HepG2 (cell line): ENCODE measurements at regions of chr16 and their contacts with region 1.

Region 1: DNA sequence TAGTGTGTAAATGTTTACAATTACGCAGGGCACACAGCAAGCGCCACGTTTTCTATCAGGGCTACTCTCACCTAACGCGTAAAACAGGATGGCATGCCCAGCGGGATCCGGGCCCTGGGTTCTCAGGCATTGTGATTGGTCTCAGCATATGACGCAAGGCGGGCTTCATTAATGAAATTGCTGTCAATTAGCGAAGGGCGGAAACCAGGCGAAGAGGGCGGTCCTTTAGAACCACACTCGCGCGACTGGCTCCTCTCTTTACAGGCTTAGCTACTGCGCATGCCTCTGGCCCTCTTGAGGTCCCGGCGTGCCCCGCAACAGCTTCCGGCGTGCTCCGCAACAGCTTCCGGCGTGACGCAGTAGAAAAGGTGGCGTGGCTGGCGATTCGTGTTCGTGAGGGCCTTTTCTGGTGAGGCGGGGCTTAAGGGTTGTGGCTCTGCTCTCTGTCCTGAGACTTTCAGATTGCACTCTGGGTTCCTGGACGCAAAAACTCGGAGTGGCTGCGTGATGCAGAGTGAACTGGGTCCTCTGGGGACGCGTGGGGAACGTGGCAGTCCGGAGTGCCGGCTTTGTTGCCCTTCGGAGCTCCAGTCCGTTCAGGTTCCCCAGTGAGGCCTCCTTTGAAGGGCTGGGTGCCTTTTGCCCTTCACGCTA is 9.2 kb downstream of the OR2C1 start:
- DNase-seq: peak; percentile 94
- ATAC-seq: peak; percentile 87
- H3K4me3 ChIP-seq: peak overlapping the region; percentile 74 to 79 (median 75); a peak in 5 of 6 replicates
- H3K27ac ChIP-seq: peak overlapping the region; percentile 93
- H3K4me1 ChIP-seq: peaks cover 20% of the 10 kb centered on the region
- H3K27me3 ChIP-seq: peaks cover 0 to 13% of the 10 kb centered on the region in 2 experiments; a peak in 2 of 5 replicates
- CTCF ChIP-seq: no peak
- EP300 ChIP-seq: no peak
- POLR2A ChIP-seq: peak; percentile 65 to 84
- RAD21 ChIP-seq: no peak

Region 2: DNA sequence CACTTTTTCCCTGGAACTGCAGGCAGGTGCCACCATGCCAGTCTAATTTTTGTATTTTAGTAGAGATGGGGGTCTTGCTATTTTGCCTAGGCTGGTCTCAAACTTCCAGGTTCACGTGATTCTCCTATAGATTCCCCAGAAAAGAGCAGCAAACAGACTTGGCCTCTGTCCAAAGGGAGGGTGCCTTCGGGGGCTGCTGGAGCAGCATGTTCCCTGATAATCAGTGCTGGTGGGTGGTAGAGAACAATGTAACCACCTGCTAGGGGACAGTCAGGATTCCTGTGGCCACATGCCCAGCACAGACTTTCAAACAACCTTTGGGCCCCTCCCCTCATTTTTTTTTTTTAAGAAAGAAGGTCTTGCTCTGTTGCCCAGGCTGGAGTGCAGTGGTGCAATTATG is 949.8 kb before region 1 on chr16:
- CTCF ChIA-PET with region 1: no interaction called
- POLR2A ChIA-PET with region 1: no interaction called
- in situ Hi-C with region 1: no loop called
- intact Hi-C with region 1: no loop called
- DNase-seq: no peak
- ATAC-seq: no peak
- H3K4me3 ChIP-seq: no peak overlapping the region
- H3K27ac ChIP-seq: no peak overlapping the region
- H3K4me1 ChIP-seq: peaks cover 8% of the 10 kb centered on the region
- H3K27me3 ChIP-seq: peaks cover 0 to 23% of the 10 kb centered on the region in 2 experiments; a peak in 3 of 5 replicates
- CTCF ChIP-seq: no peak
- EP300 ChIP-seq: no peak
- POLR2A ChIP-seq: no peak
- RAD21 ChIP-seq: no peak

Region 3: GRCh38 chr16:3282730-3283524 is 82.0 kb before region 1 on chr16 and contains the start of gene ZNF263:
- CTCF ChIA-PET with region 1: no interaction called
- POLR2A ChIA-PET with region 1: interaction called, 24 read pairs
- in situ Hi-C with region 1: no loop called
- intact Hi-C with region 1: loop called (anchors 1 kb)
- DNase-seq: peak; percentile 97
- ATAC-seq: peak; percentile 93
- H3K4me3 ChIP-seq: peak within 1 kb of the TSS; percentile 79 to 100 (median 99)
- H3K27ac ChIP-seq: peak within 1 kb of the TSS; percentile 99
- H3K4me1 ChIP-seq: peaks cover 45% of the 10 kb centered on the region
- H3K27me3 ChIP-seq: no peaks in the 10 kb centered on the region; a peak in 1 of 5 replicates
- CTCF ChIP-seq: peak; percentile 16; the same call in 1 of the 2 replicates
- EP300 ChIP-seq: peak in 1 of 2 experiments; percentile 29; a peak in 1 of 4 replicates
- POLR2A ChIP-seq: peak; percentile 68 to 89
- RAD21 ChIP-seq: peak; percentile 28
- total RNA-seq, gene ZNF263: 40.3 and 41.2 TPM in 2 replicates

Region 4: DNA sequence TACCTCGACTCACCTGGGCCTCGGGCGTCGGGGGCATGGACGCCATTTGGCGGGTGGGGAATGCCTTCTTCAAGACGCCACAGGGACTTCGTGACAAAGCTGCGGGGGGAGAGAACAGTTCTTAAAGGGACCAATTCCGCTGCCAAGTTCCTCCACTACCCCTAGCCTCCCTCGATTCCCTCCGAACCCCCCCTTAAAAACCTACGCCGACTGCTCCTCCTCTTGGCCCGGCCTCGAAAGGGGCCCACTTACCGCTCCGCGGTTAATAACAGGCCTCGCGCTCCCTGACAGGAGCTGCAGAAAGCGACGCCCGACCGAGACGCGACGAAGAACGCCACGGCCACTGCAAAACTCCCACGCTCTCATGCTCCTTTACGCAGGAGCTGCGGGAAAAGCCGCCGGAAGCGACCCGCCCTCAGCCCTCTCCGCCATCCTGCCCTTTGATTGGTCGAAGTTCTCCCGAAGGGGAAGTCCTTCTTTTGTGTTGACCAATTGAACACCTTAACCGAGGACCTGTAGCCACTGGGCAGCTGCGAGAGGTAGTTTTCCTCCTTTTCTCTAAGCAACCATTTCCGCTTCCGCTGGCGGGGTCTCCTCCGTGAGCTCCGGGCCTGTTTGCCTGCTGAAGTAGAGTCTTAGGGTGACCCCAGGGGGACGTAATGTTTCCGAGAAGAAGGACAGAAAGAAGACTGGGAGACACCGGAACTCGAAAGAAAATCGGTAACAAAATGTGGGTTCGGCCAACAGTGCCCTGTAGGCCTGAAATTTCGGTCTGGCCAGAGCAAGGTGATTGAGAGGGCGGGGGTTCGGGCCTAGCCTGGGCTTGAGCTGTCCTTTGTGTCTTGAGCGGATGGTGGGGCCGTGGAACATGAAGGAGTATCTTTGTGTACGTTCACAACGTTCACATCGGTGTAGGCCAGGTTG is 78.5 kb after region 1 on chr16 and contains the starts of genes NAA60 and ZNF597:
- CTCF ChIA-PET with region 1: no interaction called
- POLR2A ChIA-PET with region 1: interaction called, 28 read pairs
- in situ Hi-C with region 1: no loop called
- intact Hi-C with region 1: no loop called
- DNase-seq: peak; percentile 93
- ATAC-seq: peak; percentile 94
- H3K4me3 ChIP-seq: peak within 1 kb of the TSS; percentile 66 to 76 (median 75)
- H3K27ac ChIP-seq: peak within 1 kb of the TSS; percentile 78
- H3K4me1 ChIP-seq: peaks cover 66% of the 10 kb centered on the region
- H3K27me3 ChIP-seq: no peaks in the 10 kb centered on the region; a peak in 1 of 5 replicates
- CTCF ChIP-seq: peak; percentile 2; the same call in 1 of the 2 replicates
- EP300 ChIP-seq: no peak
- POLR2A ChIP-seq: peak; percentile 42 to 69
- RAD21 ChIP-seq: no peak
- total RNA-seq, gene NAA60: 14.7 and 16.9 TPM in 2 replicates
- total RNA-seq, gene ZNF597: 2.4 and 3.8 TPM in 2 replicates